Cardiac septum (tissue), 1 donor: ENCODE measurements at regions of chr7 and their contacts with region 1.

Region 1: GRCh38 chr7:32761451-32762205 is 129.9 kb downstream of the KBTBD2 start:
- DNase-seq: no peak

Region 2: DNA sequence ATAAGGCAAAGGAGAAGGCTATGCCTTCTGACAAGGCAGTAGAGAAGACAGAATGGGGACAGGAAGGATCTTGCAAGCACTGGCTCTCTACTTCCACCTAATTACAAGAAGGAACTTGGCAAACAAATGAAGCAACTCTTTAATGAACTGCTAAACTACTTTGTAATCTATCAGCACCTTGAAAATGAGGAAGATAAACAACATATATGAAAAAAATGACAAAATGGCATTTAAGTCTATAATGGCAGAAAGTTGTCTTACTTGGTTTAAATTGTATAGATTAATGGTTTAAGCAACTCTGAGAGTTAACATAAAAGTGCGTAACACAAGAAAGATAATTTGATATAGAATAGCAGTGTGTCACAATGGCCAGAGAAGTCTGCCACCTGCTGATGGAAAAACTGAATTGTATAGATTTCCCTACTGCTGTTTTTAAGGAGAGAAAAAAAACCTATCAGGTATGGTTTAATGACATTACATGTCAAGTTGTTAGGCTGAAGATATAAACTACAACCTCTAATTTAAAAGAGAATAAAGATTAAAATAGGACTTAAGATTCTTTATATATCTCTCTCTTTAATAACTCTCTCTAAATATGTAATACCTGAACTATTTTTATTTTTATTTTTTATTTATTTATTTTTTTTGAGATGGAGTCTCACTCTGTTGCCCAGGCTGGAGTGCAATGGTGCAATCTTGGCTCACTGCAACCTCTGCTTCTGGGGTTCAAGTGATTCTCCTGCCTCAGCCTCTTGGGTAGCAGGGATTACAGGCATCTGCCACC is 289.1 kb after region 1 on chr7:
- intact Hi-C with region 1: loop called (anchors 10 kb)
- DNase-seq: no peak

Region 3: DNA sequence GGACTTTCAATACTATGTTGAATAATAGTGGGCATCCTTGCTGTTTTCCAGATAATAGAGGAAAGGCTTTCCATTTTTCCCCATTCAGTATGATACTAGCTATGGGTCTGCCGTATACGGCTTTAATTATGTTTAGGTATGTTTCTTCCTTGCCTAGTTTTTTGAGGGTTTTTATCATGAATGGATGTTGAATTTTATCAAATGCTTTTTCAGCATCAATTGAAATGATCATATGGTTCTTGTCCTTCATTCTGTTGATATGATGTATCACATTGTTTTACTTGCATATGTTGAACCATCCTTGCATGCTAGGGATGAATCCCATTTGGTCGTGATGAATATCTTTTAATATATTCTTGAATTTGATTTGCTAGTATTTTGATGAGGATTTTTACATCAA is 356.8 kb after region 1 on chr7:
- intact Hi-C with region 1: no loop called
- DNase-seq: no peak